ENCODE measurements at regions of chr10 and their contacts with region 1.

Region 1: GRCh38 chr10:34994565-34995142 is 95.5 kb downstream of the CUL2 start:
- DNase-seq: peak; percentile 72 to 77
- ATAC-seq: peak; percentile 86 to 89
- H3K4me3 ChIP-seq: no peak overlapping the region
- H3K27ac ChIP-seq: peak overlapping the region in 1 of 2 experiments; percentile 55; a peak in 3 of 6 replicates
- H3K4me1 ChIP-seq: peaks cover 21% of the 10 kb centered on the region
- CTCF ChIP-seq: peak; percentile 84
- EP300 ChIP-seq: no peak
- POLR2A ChIP-seq: no peak
- RAD21 ChIP-seq: peak; percentile 81 to 84

Region 2: DNA sequence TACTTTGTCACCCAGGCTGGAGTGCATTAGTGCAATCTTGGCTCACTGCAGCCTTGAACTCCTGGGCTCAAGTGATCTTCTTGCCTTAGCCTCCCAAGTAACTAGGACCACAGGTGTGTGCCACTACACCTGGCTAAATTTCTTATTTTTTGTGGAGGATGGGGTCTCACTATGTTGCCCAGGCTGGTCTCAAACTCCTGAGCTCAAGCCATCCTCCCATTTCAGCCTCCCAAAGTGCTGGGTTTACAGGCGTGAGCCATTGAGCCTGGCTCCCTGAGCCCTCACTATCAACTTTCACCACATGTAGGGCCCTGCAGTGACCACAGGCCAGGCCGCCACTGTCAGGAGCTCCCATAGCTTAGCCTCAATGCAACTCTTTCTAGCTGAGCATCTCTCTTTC is 14.7 kb before region 1 on chr10:
- CTCF ChIA-PET with region 1: interaction called, 16 read pairs
- POLR2A ChIA-PET with region 1: no interaction called
- DNase-seq: no peak
- ATAC-seq: no peak
- H3K4me3 ChIP-seq: no peak overlapping the region
- H3K27ac ChIP-seq: no peak overlapping the region
- H3K4me1 ChIP-seq: no peaks in the 10 kb centered on the region
- CTCF ChIP-seq: no peak
- EP300 ChIP-seq: no peak
- POLR2A ChIP-seq: no peak
- RAD21 ChIP-seq: no peak

Region 3: DNA sequence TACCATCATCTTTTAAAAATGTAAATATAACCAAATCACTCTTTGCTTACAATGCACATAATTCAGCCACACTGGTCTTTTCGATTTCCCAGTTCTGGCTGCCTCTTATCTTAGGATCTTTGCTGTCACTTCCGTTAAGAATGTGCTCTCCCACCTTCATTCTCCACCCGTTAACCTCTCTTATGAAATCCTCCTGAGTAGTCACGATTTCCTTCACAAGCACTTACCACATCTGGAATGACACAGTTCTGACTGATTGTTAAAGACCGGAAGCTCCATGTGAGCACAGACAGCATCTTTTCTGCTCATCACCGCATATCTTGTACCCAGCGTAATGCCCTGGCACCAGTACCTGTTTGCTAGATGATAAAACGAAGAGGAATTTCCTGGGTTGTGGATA is 11.2 kb after region 1 on chr10:
- CTCF ChIA-PET with region 1: interaction called, 29 read pairs
- POLR2A ChIA-PET with region 1: interaction called, 3 read pairs
- DNase-seq: peak; percentile 19 to 80
- ATAC-seq: peak; percentile 83 to 97
- H3K4me3 ChIP-seq: no peak overlapping the region
- H3K27ac ChIP-seq: peak overlapping the region in 1 of 2 experiments; percentile 78; a peak in 4 of 6 replicates
- H3K4me1 ChIP-seq: peaks cover 24% of the 10 kb centered on the region; the same call in 2 of the 3 replicates
- CTCF ChIP-seq: no peak
- EP300 ChIP-seq: peak in 1 of 2 experiments; percentile 49; a peak in 2 of 5 replicates
- POLR2A ChIP-seq: no peak
- RAD21 ChIP-seq: no peak

Region 4: GRCh38 chr10:35011771-35012191 is 17.1 kb after region 1 on chr10:
- CTCF ChIA-PET with region 1: interaction called, 29 read pairs
- POLR2A ChIA-PET with region 1: interaction called, 3 read pairs
- DNase-seq: no peak
- ATAC-seq: no peak
- H3K4me3 ChIP-seq: no peak overlapping the region
- H3K27ac ChIP-seq: no peak overlapping the region
- H3K4me1 ChIP-seq: peaks cover 13% of the 10 kb centered on the region; the same call in 2 of the 3 replicates
- CTCF ChIP-seq: no peak
- EP300 ChIP-seq: no peak
- POLR2A ChIP-seq: no peak
- RAD21 ChIP-seq: no peak

Region 5: GRCh38 chr10:35019041-35020024 is 24.7 kb after region 1 on chr10:
- CTCF ChIA-PET with region 1: interaction called, 99 read pairs
- POLR2A ChIA-PET with region 1: no interaction called
- DNase-seq: no peak
- ATAC-seq: no peak
- H3K4me3 ChIP-seq: no peak overlapping the region
- H3K27ac ChIP-seq: no peak overlapping the region
- H3K4me1 ChIP-seq: no peaks in the 10 kb centered on the region
- CTCF ChIP-seq: no peak
- EP300 ChIP-seq: no peak
- POLR2A ChIP-seq: no peak
- RAD21 ChIP-seq: no peak

Region 6: DNA sequence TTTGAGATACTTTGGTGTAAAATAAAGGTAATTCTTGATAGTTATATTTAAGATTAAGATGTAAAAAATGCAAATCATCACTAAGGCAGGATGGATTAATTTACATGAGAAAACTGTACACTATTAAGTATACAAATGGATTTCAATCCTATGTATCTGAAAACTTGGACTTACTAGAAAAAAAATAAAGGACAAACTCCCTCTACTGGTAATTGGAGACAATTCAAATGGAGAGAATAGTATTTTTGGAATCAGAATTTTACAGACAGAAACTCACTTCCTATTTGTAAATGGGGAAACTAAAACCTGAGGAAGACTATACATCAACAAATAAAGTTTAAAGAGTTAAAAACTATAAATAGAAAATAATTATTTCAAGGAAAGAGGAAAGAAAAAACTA is 32.9 kb after region 1 on chr10:
- CTCF ChIA-PET with region 1: interaction called, 99 read pairs
- POLR2A ChIA-PET with region 1: no interaction called
- DNase-seq: no peak
- ATAC-seq: no peak
- H3K4me3 ChIP-seq: no peak overlapping the region
- H3K27ac ChIP-seq: no peak overlapping the region
- H3K4me1 ChIP-seq: peaks cover 3% of the 10 kb centered on the region; the same call in 1 of the 3 replicates
- CTCF ChIP-seq: peak; percentile 53
- EP300 ChIP-seq: no peak
- POLR2A ChIP-seq: no peak
- RAD21 ChIP-seq: peak; percentile 54 to 61; a peak in 4 of 5 replicates